Activated CD8-positive, alpha-beta T cell treated with anti-CD3 and anti-CD28 coated beads, Interleukin-2, amount 10 ng/mL, durations not matched to agents 7 days and 5 days (primary cell): ENCODE measurements at regions of chr10 and their contacts with region 1.

Region 1: DNA sequence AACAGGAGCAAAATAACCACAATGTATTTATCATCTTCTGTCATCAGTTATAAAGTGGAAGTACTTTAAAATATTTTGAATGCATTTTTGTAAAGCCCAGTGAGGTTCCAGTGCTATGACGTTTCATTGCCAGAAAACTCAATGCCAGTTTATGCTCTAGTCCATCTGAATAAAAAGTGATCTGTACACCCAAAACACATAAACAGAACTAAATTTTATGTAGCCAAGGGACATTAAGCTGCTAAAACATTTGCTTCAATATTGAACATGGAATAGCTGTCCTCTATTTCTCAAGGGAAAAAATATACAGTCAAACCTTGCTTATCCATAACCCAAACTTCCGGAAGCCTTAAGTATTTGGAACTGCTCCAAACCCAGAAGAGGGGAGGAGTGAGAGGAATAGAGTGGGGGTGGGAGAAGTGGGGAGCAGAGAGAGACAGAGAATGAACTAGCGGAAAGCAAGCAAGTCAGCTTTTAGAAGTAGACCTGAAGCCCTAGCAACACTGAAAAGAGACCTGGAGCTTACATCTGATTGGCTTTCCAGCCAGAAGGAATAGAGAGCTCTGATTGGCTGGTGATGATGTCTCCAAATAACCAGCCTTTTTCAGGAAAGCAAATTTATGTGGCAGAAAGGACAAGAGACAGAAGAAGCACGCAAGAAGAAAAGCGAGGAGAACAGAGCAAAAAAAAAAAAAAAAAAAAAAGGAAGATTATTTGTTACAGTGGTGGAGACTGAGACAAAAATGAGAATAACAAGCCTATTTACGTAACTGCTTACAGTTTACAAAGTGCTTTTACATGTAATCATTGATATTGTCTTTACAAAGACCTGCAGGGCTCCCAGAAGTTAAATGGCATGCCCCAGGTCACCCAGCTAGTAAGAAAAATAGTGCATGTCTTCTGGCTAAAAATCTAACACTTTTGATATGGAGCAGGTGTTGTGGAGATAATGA is 196.0 kb downstream of the RNLS start:
- DNase-seq: no peak
- ATAC-seq: no peak
- H3K4me3 Mint-ChIP-seq: no peak overlapping the region
- H3K27ac Mint-ChIP-seq: no peak overlapping the region
- H3K4me1 Mint-ChIP-seq: peaks cover 19% of the 10 kb centered on the region
- H3K27me3 Mint-ChIP-seq: no peaks in the 10 kb centered on the region

Region 2: DNA sequence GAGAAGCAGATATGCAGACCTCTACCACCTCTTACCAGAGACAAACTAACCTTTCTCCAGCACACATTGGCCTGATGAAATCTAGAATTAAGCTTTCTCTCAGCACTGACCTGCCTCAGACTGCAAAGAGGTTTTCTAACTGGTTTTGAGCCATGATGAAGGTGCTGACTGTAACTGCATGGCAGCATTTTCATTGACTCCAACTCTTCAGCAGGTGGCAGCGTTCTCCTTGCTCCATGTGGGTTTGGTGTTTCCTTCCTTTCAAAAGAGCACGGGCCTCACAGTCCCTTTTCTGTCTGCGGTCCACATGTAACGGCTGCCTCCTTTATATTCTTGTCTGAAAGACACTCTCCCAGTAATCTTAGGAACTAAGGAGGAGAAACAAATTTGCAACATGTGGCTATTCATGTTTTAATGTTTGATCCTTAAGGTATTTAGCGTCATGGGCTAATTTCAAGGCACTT is 536.3 kb before region 1 on chr10:
- CTCF ChIA-PET with region 1: interaction called, 18 read pairs
- POLR2A ChIA-PET with region 1: interaction called, 3 read pairs
- DNase-seq: peak; percentile 74
- ATAC-seq: peak; percentile 94
- H3K4me3 Mint-ChIP-seq: no peak overlapping the region
- H3K27ac Mint-ChIP-seq: no peak overlapping the region
- H3K4me1 Mint-ChIP-seq: peaks cover 22% of the 10 kb centered on the region
- H3K27me3 Mint-ChIP-seq: no peaks in the 10 kb centered on the region

Region 3: GRCh38 chr10:88114368-88114767 is 272.7 kb before region 1 on chr10:
- CTCF ChIA-PET with region 1: interaction called, 32 read pairs
- POLR2A ChIA-PET with region 1: no interaction called
- DNase-seq: no peak
- ATAC-seq: no peak
- H3K4me3 Mint-ChIP-seq: no peak overlapping the region
- H3K27ac Mint-ChIP-seq: no peak overlapping the region
- H3K4me1 Mint-ChIP-seq: peaks cover 18% of the 10 kb centered on the region
- H3K27me3 Mint-ChIP-seq: peaks cover 4% of the 10 kb centered on the region

Region 4: DNA sequence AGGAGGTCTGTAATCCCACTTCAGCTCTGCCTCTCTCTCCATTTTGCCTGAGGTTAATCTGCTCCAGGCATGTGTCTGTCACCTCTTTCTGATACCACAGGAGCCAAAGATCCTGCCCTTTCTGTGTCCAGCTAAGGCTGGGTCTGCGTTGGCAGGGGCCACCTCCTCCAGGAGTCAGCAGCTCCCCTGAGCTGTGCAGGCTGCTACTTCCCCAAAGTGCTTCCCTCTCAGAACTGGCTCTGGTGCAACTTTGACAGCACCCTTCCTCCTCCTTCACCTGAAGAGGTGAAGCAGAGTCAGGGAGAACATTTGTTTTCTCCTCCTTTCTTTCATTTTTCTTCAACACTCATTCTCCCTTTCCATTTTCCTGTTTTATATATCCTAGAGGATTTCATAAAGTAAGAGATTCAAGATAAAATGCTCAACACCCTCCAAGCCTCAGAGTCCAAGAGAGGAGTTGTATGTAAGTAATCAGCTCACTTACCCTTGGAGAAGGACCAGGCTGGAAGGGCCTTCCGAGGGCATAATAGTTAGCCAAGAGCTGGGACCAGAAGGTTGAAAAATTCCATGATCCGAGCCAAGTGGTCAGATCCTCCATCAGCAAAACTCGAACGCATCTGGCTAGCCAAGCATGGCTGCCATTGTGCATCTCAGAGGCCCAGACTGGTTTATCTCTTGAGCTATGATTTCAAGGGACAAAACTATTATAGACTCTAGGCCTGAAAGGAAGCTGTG is 266.3 kb before region 1 on chr10:
- CTCF ChIA-PET with region 1: interaction called, 32 read pairs
- POLR2A ChIA-PET with region 1: no interaction called
- DNase-seq: no peak
- ATAC-seq: no peak
- H3K4me3 Mint-ChIP-seq: no peak overlapping the region
- H3K27ac Mint-ChIP-seq: no peak overlapping the region
- H3K4me1 Mint-ChIP-seq: peaks cover 12% of the 10 kb centered on the region
- H3K27me3 Mint-ChIP-seq: peaks cover 4% of the 10 kb centered on the region

Region 5: DNA sequence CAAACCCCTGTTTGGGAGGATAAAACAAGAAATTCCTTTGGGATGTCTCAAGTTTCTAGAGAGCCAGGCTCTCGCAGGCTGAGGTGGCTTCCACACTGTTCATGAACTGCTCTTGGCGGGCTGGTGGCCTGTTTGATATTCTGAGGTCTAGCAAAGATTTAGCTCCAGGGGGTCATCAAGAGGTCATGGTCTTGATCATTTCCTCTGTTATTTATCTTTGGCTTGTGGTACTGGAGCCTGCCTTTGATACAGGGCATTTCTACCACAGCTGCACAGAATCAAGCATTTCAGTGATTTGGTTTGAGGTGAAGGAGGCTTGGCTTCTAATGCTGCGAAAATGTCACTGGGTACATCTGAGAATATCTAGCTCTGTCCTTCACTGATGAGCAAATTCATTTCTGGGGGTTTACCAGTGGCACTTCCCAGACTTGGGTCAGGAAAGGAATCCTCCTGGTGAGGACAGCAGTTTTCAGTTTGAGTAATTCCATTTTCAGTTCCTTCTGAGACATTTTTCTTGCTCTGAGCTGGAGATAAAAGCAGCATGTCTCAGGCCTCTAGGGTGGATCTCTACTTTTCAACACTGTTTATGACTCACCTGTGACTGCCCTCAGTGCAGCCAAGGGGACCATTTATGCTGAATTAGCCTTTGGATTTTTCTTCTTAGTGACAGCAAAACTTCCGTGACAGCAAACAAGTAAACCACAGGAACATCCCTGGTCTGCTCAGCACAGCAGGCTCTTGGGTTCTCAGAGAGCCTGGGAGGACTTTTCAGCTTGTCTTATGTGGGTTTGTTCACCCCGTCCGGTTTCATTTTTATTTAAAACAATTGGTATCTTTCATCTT is 116.0 kb before region 1 on chr10:
- CTCF ChIA-PET with region 1: interaction called, 25 read pairs
- POLR2A ChIA-PET with region 1: interaction called, 8 read pairs
- DNase-seq: peak; percentile 82
- ATAC-seq: peak; percentile 85
- H3K4me3 Mint-ChIP-seq: peak overlapping the region; percentile 63
- H3K27ac Mint-ChIP-seq: peak overlapping the region; percentile 87
- H3K4me1 Mint-ChIP-seq: peaks cover 51% of the 10 kb centered on the region
- H3K27me3 Mint-ChIP-seq: peaks cover 12% of the 10 kb centered on the region

Region 6: DNA sequence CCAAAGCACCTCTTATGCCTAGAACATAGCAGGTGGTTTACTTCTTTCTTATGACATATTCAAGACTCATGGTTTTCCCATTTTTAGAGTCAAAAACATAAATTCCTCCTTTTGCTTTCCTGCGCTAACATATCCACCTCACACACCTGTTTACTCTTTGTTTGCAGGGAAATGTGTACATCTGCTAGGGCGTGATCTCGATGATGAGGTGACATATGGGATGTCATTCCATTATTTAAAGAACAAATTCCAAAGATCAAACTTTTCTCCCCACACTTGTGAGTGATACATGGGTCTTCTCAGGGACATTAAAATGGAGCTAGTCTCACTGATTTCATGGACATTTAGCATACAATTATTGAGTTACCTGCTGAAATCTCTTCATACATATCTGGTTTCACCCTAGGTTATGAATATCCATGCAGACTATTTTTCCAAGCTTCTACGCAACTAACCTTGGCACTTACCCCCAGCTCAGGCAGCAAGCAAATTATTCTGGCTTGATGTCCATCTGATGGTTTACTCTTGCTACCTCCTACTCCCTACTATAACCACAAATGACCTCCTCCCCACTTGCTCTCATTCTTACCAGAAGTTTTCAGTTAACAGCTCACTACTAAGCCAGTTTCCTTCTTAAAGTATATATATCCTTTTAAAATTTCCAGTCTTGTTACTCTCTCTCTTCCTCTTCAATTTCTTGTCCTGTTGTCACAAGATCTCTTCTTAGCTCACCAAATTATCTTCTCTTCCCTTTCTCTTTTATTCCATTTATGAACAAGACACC is 12.5 kb before region 1 on chr10:
- CTCF ChIA-PET with region 1: interaction called, 24 read pairs
- POLR2A ChIA-PET with region 1: no interaction called
- DNase-seq: no peak
- ATAC-seq: no peak
- H3K4me3 Mint-ChIP-seq: no peak overlapping the region
- H3K27ac Mint-ChIP-seq: no peak overlapping the region
- H3K4me1 Mint-ChIP-seq: peaks cover 14% of the 10 kb centered on the region
- H3K27me3 Mint-ChIP-seq: no peaks in the 10 kb centered on the region

Region 7: GRCh38 chr10:88534072-88534665 is 147.1 kb after region 1 on chr10:
- CTCF ChIA-PET with region 1: no interaction called
- POLR2A ChIA-PET with region 1: no interaction called
- DNase-seq: no peak
- ATAC-seq: no peak
- H3K4me3 Mint-ChIP-seq: no peak overlapping the region
- H3K27ac Mint-ChIP-seq: no peak overlapping the region
- H3K4me1 Mint-ChIP-seq: no peaks in the 10 kb centered on the region
- H3K27me3 Mint-ChIP-seq: peaks cover 17% of the 10 kb centered on the region